Activated B cell treated with CpG ODN at 0.5 μM for 24 hours (primary cell): ENCODE measurements at regions of chr2 and their contacts with region 1.

Region 1: DNA sequence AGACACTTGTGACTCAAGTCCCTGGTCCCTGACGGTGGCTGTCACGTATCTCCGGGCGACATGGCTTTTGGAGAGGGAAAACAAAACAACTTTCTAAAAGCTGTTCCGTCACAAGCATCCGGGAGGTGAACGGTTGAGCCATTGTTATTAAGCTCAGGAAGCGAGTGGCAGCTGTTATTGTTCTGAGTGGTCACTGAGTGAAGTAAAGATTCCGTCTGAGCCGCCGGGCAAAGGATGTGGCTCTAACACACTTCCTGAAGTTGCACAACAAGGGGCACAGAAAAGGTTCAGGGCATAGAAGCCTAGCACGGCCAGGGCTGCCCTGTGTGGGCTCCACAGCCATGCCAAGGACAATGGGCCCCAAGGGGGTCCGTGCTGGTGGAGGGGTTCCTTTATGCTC is 24.3 kb downstream of the INPP5D start:
- DNase-seq: no peak
- ATAC-seq: no peak
- H3K4me3 Mint-ChIP-seq: peak overlapping the region; percentile 75
- H3K27ac Mint-ChIP-seq: peak overlapping the region; percentile 98
- H3K4me1 Mint-ChIP-seq: peaks cover 97% of the 10 kb centered on the region
- H3K27me3 Mint-ChIP-seq: no peaks in the 10 kb centered on the region
- CTCF ChIP-seq: no peak

Region 2: GRCh38 chr2:233012301-233012971 is 72.1 kb before region 1 on chr2:
- CTCF ChIA-PET with region 1: no interaction called
- POLR2A ChIA-PET with region 1: no interaction called
- intact Hi-C with region 1: no loop called
- DNase-seq: no peak
- ATAC-seq: no peak
- H3K4me3 Mint-ChIP-seq: no peak overlapping the region
- H3K27ac Mint-ChIP-seq: no peak overlapping the region
- H3K4me1 Mint-ChIP-seq: peaks cover 6% of the 10 kb centered on the region
- H3K27me3 Mint-ChIP-seq: peaks cover 3% of the 10 kb centered on the region
- CTCF ChIP-seq: no peak

Region 3: GRCh38 chr2:233053928-233054784 is 30.3 kb before region 1 on chr2:
- CTCF ChIA-PET with region 1: interaction called, 11 read pairs
- POLR2A ChIA-PET with region 1: interaction called, 270 read pairs
- intact Hi-C with region 1: no loop called
- DNase-seq: peak; percentile 72
- ATAC-seq: peak; percentile 74
- H3K4me3 Mint-ChIP-seq: no peak overlapping the region
- H3K27ac Mint-ChIP-seq: peak overlapping the region; percentile 32
- H3K4me1 Mint-ChIP-seq: peaks cover 16% of the 10 kb centered on the region
- H3K27me3 Mint-ChIP-seq: peaks cover 3% of the 10 kb centered on the region
- CTCF ChIP-seq: peak; percentile 65

Region 4: GRCh38 chr2:233068762-233069418 is 15.6 kb before region 1 on chr2:
- CTCF ChIA-PET with region 1: no interaction called
- POLR2A ChIA-PET with region 1: interaction called, 31 read pairs
- intact Hi-C with region 1: loop called (anchors 1 kb)
- DNase-seq: no peak
- ATAC-seq: peak; percentile 60
- H3K4me3 Mint-ChIP-seq: peak overlapping the region; percentile 67
- H3K27ac Mint-ChIP-seq: peak overlapping the region; percentile 75
- H3K4me1 Mint-ChIP-seq: peaks cover 78% of the 10 kb centered on the region
- H3K27me3 Mint-ChIP-seq: no peaks in the 10 kb centered on the region
- CTCF ChIP-seq: no peak

Region 5: DNA sequence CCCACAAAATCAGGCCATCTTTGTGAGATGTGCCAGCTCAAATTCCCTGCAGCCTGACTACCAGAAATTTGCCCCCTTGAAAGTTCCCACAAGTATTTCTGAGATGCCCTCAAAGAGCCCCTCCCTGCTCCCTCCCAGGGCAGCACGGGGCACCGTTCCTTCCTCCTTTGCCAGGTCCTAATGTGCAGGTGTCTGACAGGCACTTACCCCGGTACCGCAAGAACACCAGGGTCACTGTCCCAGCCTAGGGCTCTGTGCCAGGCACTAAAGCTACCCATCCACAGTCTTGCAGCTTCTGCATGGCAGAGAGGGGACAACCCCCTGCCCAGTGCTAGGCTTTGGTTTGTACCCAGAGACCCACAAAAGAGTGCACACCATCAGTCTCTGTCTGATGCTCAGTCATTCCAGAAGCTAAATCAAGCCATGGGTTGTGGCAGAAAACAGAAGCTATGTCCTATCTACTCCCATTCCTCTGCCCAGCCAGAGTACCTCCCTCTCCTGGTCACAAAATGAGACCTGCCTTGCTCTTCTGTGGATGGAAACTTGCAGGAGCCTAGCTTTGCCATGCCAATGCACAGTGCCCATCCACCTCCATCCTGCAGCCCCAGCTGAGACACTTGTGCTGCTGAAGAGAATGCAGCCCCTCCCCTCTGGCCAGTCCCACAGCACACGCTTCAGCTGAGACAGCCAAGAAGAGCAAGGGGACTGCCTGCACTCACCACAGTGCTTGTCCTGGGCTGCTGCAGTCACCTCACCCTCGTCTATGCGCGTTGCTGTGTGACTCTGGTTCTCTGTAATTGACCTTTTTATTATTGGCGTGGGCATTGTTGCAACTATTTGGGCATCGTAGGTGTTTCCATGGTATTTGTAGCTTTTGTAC is 24.4 kb after region 1 on chr2:
- CTCF ChIA-PET with region 1: no interaction called
- POLR2A ChIA-PET with region 1: interaction called, 319 read pairs
- intact Hi-C with region 1: no loop called
- DNase-seq: no peak
- ATAC-seq: peak; percentile 84
- H3K4me3 Mint-ChIP-seq: peak overlapping the region; percentile 45
- H3K27ac Mint-ChIP-seq: peak overlapping the region; percentile 83
- H3K4me1 Mint-ChIP-seq: peaks cover 86% of the 10 kb centered on the region
- H3K27me3 Mint-ChIP-seq: no peaks in the 10 kb centered on the region
- CTCF ChIP-seq: no peak

Region 6: DNA sequence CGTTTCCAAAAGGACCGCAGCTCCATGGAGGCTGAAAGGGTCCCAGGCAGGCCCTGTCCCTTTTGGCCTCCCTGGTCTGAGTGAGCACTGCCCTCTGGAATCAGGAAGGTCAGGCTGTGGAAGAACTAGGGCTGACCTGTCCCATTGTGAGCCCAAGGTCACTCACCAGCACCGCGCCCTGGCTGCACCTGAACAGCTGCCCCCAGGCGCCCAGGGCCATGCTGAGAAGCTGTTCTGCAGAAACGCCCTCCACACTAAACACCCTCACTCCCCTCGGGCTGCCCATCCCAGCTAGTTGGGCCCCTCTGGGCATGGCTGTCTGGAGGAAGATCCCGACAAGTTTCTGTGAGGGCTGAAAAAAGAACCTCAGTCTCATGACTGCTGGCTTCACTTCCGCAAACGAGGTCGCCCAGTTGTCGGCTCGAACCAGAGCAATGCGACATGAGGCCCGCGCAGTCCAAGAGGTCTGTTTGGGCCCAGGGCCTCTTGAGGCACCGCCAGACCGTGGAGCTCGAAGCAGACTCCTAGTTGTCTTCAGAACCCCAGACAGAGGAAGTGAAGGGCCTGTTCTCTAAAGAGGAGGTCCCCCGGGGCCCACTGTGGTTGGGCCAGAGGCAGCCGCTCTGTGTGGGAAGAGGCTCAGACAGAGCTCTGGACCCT is 40.1 kb after region 1 on chr2:
- CTCF ChIA-PET with region 1: interaction called, 3 read pairs
- POLR2A ChIA-PET with region 1: interaction called, 17 read pairs
- intact Hi-C with region 1: loop called (anchors 1 kb)
- DNase-seq: peak; percentile 73
- ATAC-seq: peak; percentile 97
- H3K4me3 Mint-ChIP-seq: peak overlapping the region; percentile 78
- H3K27ac Mint-ChIP-seq: peak overlapping the region; percentile 92
- H3K4me1 Mint-ChIP-seq: peaks cover 52% of the 10 kb centered on the region
- H3K27me3 Mint-ChIP-seq: no peaks in the 10 kb centered on the region
- CTCF ChIP-seq: no peak